ENCODE measurements at regions of chr16 and their contacts with region 1.

Region 1: GRCh38 chr16:28317040-28317880 is 24.9 kb downstream of the SBK1 start:
- DNase-seq: no peak
- H3K4me3 ChIP-seq: no peak overlapping the region
- H3K27ac ChIP-seq: no peak overlapping the region
- H3K4me1 ChIP-seq: no peaks in the 10 kb centered on the region
- H3K27me3 ChIP-seq: peaks cover 0 to 14% (median 0%) of the 10 kb centered on the region in 4 donors
- CTCF ChIP-seq: peak; percentile 71 to 89 (median 80)
- EP300 ChIP-seq: no peak
- POLR2A ChIP-seq: no peak

Region 2: GRCh38 chr16:28277537-28278388 is 39.5 kb before region 1 on chr16:
- intact Hi-C with region 1: loop called (anchors 2 kb)
- DNase-seq: peak; percentile 96
- H3K4me3 ChIP-seq: peak overlapping the region; percentile 48 to 61 (median 49)
- H3K27ac ChIP-seq: no peak overlapping the region
- H3K4me1 ChIP-seq: peaks cover 8 to 12% (median 10%) of the 10 kb centered on the region in 4 donors
- H3K27me3 ChIP-seq: peaks cover 0 to 92% (median 0%) of the 10 kb centered on the region in 4 donors
- CTCF ChIP-seq: peak; percentile 92 to 97 (median 95)
- EP300 ChIP-seq: no peak
- POLR2A ChIP-seq: no peak

Measured in esophagus muscularis mucosa (tissue), 4 donors.